Activated CD4-positive, alpha-beta T cell treated with anti-CD3 and anti-CD28 coated beads for 36 hours (primary cell): ENCODE measurements at regions of chr13 and their contacts with region 1.

Region 1: DNA sequence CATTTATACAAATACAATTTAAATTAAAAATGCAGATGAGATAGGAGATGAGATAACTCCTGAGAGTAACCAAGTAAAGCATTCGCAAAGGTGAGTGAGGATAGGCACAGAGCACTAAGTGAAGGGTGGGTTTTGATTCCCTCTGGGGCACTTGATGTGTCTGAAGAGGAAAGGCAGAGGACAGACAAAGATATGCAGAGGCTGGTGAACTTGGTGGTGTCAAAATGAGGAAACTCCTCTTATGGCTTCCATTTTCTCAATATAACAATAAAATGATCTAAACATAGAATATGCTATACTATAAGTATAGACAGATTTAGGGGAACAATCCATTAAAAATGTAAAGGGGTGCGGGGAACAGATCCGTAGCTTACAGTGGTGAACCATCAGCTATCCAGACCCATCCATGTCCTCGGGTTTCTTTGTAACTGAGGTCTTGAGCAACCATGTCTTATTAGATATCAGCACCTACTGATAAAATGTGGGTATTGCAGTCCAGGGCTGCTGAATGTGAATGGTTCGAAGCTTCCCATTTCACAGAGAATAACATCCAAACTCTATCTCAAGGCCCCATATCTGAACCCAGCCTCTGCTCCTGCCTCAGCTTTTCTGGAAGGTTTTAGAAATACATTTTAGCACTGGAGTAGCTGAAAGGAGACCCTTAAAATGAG is 73.9 kb upstream of the SLC10A2 start:
- DNase-seq: no peak
- ATAC-seq: no peak
- H3K4me3 Mint-ChIP-seq: no peak overlapping the region
- H3K27ac Mint-ChIP-seq: no peak overlapping the region
- H3K4me1 Mint-ChIP-seq: no peaks in the 10 kb centered on the region
- H3K27me3 Mint-ChIP-seq: peaks cover 2% of the 10 kb centered on the region

Region 2: GRCh38 chr13:102917019-102917418 is 223.1 kb before region 1 on chr13:
- CTCF ChIA-PET with region 1: interaction called, 5 read pairs
- POLR2A ChIA-PET with region 1: no interaction called
- intact Hi-C with region 1: loop called (anchors 2 kb)
- DNase-seq: no peak
- ATAC-seq: no peak
- H3K4me3 Mint-ChIP-seq: no peak overlapping the region
- H3K27ac Mint-ChIP-seq: no peak overlapping the region
- H3K4me1 Mint-ChIP-seq: no peaks in the 10 kb centered on the region
- H3K27me3 Mint-ChIP-seq: peaks cover 28% of the 10 kb centered on the region

Region 3: GRCh38 chr13:103615771-103616170 is 475.6 kb after region 1 on chr13:
- CTCF ChIA-PET with region 1: no interaction called
- POLR2A ChIA-PET with region 1: no interaction called
- intact Hi-C with region 1: no loop called
- DNase-seq: no peak
- ATAC-seq: no peak
- H3K4me3 Mint-ChIP-seq: no peak overlapping the region
- H3K27ac Mint-ChIP-seq: no peak overlapping the region
- H3K4me1 Mint-ChIP-seq: no peaks in the 10 kb centered on the region
- H3K27me3 Mint-ChIP-seq: no peaks in the 10 kb centered on the region